CD8-positive, alpha-beta T cell (primary cell): ENCODE measurements at regions of chr17 and their contacts with region 1.

Region 1: DNA sequence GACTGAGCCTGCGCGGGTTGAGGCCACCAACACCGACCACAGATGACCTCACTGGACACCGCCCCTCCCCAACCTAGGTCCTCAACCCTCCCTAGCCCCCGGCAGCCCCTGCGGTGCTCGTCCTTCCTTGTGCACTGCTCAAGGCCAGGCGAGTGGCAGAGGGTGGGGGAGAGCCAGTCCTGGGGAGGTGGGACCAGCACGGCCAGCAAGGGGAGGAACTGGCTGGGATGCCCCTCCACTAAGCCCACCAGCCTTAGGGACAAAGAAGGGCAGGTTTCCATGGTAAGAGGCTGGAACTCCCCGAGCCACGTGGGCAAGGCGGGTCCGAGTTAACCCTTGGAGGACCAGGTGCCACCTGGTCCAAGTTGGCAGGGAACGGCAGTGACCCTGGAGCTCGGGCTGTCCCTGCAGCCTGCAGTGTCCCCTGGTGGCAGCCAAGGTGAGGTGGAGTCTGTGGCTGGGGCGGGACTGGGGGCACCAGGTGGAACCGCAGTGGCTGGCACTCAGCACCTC is 9.2 kb downstream of the FSCN2 start:
- DNase-seq: peak in 6 of 9 experiments; percentile 35 to 62 (median 47)
- ATAC-seq: peak; percentile 78
- H3K4me3 ChIP-seq: no peak overlapping the region
- H3K4me3 Mint-ChIP-seq: no peak overlapping the region
- H3K27ac ChIP-seq: no peak overlapping the region
- H3K27ac Mint-ChIP-seq: no peak overlapping the region
- H3K4me1 ChIP-seq: peaks cover 4% of the 10 kb centered on the region
- H3K4me1 Mint-ChIP-seq: peaks cover 4% of the 10 kb centered on the region
- H3K27me3 ChIP-seq: peaks cover 14 to 22% of the 10 kb centered on the region in 2 experiments
- H3K27me3 Mint-ChIP-seq: peaks cover 17% of the 10 kb centered on the region
- CTCF ChIP-seq: peak; percentile 30

Region 2: DNA sequence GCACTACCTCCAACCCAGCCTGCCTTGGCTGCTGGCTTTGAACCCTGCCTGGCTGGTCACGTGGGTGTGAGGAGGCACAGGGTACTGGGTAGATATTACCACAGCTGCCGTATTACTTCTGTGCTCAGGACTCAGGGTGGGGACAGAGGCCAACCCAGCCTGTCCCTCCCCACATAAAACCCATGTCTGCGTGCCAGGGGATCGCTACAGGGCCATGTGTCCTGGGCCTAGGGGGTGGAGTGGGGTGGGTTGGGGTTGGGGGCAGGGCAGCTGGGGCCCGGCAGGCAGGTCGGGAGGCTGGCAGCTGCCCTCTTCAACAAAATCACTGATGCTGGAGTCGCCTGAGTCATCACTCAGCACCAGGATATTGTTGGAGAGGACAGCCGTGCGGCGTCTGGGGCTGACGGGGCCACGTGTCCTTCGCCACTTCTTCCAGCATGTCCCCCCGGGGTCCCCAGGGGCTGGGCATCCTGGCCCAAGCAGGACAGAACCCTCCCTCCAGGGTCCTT is 411.8 kb before region 1 on chr17:
- CTCF ChIA-PET with region 1: no interaction called
- POLR2A ChIA-PET with region 1: no interaction called
- intact Hi-C with region 1: no loop called
- DNase-seq: no peak
- ATAC-seq: no peak
- H3K4me3 ChIP-seq: no peak overlapping the region
- H3K4me3 Mint-ChIP-seq: no peak overlapping the region
- H3K27ac ChIP-seq: no peak overlapping the region
- H3K27ac Mint-ChIP-seq: no peak overlapping the region
- H3K4me1 ChIP-seq: no peaks in the 10 kb centered on the region
- H3K4me1 Mint-ChIP-seq: no peaks in the 10 kb centered on the region
- H3K27me3 ChIP-seq: no peaks in the 10 kb centered on the region
- H3K27me3 Mint-ChIP-seq: no peaks in the 10 kb centered on the region
- CTCF ChIP-seq: no peak

Region 3: GRCh38 chr17:81142301-81143199 is 394.8 kb before region 1 on chr17:
- CTCF ChIA-PET with region 1: no interaction called
- POLR2A ChIA-PET with region 1: no interaction called
- intact Hi-C with region 1: loop called in 1 of 2 experiments (anchors 1 kb)
- DNase-seq: peak; percentile 44 to 73 (median 57)
- ATAC-seq: peak; percentile 72
- H3K4me3 ChIP-seq: no peak overlapping the region
- H3K4me3 Mint-ChIP-seq: no peak overlapping the region
- H3K27ac ChIP-seq: no peak overlapping the region
- H3K27ac Mint-ChIP-seq: no peak overlapping the region
- H3K4me1 ChIP-seq: no peaks in the 10 kb centered on the region
- H3K4me1 Mint-ChIP-seq: no peaks in the 10 kb centered on the region
- H3K27me3 ChIP-seq: peaks cover 0 to 4% of the 10 kb centered on the region in 2 experiments
- H3K27me3 Mint-ChIP-seq: peaks cover 4% of the 10 kb centered on the region
- CTCF ChIP-seq: peak; percentile 47

Region 4: DNA sequence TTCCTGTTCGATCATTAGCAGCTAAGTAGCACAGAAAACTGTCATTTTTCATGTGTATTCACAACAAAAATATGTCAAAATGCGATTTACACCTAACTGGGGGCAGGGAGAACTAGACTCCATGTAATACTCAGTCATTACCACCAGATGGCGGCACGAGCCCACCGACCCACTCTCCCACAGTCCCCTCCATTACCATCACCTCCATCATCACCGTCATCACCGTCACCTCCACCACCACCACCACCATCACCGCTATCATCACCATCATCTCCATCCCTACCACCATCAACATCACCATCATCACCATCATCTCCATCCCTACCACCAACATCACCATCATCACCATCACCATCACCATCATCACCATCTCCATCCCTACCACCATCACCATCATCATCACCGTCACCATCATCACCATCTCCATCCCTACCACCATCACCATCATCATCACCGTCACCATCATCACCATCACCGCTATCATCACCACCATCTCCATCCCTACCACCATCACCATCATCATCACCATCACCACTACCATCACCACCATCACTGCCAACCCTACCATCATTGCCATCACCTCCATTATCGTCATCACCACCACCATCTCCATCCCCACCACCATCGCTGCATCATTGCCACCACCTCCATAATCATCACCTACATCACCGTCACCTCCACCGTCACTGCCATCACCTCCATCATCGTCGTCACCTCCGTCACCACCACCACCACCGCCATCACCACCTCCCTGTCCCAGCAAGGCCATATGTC is 283.9 kb before region 1 on chr17:
- CTCF ChIA-PET with region 1: no interaction called
- POLR2A ChIA-PET with region 1: no interaction called
- intact Hi-C with region 1: loop called in 1 of 2 experiments (anchors 1 kb)
- DNase-seq: peak; percentile 32 to 78 (median 64)
- ATAC-seq: peak; percentile 89
- H3K4me3 ChIP-seq: no peak overlapping the region
- H3K4me3 Mint-ChIP-seq: no peak overlapping the region
- H3K27ac ChIP-seq: no peak overlapping the region
- H3K27ac Mint-ChIP-seq: peak overlapping the region; percentile 52
- H3K4me1 ChIP-seq: peaks cover 8% of the 10 kb centered on the region
- H3K4me1 Mint-ChIP-seq: peaks cover 13% of the 10 kb centered on the region
- H3K27me3 ChIP-seq: no peaks in the 10 kb centered on the region
- H3K27me3 Mint-ChIP-seq: no peaks in the 10 kb centered on the region
- CTCF ChIP-seq: peak; percentile 80

Region 5: DNA sequence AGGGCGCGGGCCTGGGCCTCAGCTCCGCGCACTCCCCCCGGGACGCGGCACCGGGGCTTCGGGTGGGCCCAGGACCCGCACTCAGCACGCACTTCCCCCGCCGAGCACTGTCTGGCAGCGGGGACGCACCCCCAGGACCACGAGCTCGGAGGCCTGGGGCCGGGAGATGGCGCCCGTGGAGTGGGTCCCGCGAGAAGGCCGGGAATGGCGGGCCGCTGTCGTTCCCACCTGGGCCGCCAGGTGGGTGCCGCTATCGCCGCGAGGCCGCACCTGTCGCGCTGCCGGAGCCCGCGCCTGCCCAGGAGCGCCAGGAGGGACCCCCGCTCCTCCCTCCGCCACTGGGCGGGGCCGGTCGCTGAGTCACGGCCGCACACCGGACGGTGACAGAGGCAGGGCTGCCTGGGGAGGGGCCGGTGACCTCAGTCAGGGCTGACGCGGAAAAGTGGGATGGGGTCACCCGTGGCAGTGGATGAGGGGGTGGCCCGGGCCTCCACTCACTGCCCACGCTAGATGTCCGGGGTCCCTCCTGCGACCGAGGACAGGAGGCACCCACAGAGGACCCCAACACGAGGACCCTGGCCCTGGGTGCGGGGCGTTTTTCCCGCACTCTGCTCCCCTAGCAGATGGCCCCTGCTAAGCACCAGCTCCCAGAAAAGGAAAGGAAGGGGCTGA is 18.0 kb before region 1 on chr17:
- CTCF ChIA-PET with region 1: interaction called, 8 read pairs
- POLR2A ChIA-PET with region 1: interaction called, 3 read pairs
- intact Hi-C with region 1: loop called (anchors 1 kb)
- DNase-seq: peak; percentile 37 to 86 (median 74)
- ATAC-seq: peak; percentile 70
- H3K4me3 ChIP-seq: peak overlapping the region; percentile 37 to 60
- H3K4me3 Mint-ChIP-seq: peak overlapping the region; percentile 32
- H3K27ac ChIP-seq: no peak overlapping the region
- H3K27ac Mint-ChIP-seq: no peak overlapping the region
- H3K4me1 ChIP-seq: peaks cover 42% of the 10 kb centered on the region
- H3K4me1 Mint-ChIP-seq: peaks cover 30% of the 10 kb centered on the region
- H3K27me3 ChIP-seq: peaks cover 0 to 13% of the 10 kb centered on the region in 2 experiments
- H3K27me3 Mint-ChIP-seq: peaks cover 2% of the 10 kb centered on the region
- CTCF ChIP-seq: peak; percentile 96

Region 6: DNA sequence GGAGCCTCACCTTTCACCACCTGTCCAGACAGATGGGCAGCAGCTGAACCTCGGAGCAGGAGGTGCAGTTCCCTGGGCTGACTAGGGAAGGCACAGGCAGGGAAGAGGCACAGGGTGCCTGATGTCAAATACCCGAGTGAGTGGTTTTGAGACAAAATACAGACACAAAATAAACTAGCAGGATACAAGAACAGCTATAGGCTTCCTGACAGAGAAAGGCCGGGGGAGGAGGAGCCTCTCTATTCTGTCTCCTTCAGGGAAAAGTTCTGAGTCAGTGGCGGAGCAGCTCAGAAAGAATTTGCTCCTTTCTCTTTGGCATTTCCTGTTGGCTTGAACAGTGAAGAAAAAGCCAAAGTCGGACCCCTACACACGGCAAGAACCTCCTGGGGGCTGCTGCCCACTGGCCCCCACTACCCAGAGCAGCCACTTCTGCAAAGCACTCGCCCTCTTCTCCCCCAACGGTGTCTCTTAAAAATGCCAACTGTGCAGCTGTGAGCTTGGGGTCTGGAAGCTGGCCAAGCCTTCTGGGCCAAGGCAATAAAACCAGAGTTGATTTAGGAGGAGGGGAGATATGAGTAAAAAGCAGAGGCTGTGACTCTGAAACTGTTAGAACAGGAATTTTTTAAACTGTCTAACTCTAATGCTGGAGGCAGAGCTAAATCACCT is 29.2 kb after region 1 on chr17:
- CTCF ChIA-PET with region 1: no interaction called
- POLR2A ChIA-PET with region 1: no interaction called
- intact Hi-C with region 1: no loop called
- DNase-seq: no peak
- ATAC-seq: no peak
- H3K4me3 ChIP-seq: no peak overlapping the region
- H3K4me3 Mint-ChIP-seq: no peak overlapping the region
- H3K27ac ChIP-seq: no peak overlapping the region
- H3K27ac Mint-ChIP-seq: peak overlapping the region; percentile 32
- H3K4me1 ChIP-seq: no peaks in the 10 kb centered on the region
- H3K4me1 Mint-ChIP-seq: peaks cover 2% of the 10 kb centered on the region
- H3K27me3 ChIP-seq: no peaks in the 10 kb centered on the region
- H3K27me3 Mint-ChIP-seq: no peaks in the 10 kb centered on the region
- CTCF ChIP-seq: no peak